Left ventricle myocardium superior (tissue), 1 donor: ENCODE measurements at regions of chr11 and their contacts with region 1.

Region 1: GRCh38 chr11:63023841-63024648 is 8.4 kb upstream of the SLC22A8 start:
- DNase-seq: peak; percentile 91
- ATAC-seq: peak; percentile 94

Region 2: DNA sequence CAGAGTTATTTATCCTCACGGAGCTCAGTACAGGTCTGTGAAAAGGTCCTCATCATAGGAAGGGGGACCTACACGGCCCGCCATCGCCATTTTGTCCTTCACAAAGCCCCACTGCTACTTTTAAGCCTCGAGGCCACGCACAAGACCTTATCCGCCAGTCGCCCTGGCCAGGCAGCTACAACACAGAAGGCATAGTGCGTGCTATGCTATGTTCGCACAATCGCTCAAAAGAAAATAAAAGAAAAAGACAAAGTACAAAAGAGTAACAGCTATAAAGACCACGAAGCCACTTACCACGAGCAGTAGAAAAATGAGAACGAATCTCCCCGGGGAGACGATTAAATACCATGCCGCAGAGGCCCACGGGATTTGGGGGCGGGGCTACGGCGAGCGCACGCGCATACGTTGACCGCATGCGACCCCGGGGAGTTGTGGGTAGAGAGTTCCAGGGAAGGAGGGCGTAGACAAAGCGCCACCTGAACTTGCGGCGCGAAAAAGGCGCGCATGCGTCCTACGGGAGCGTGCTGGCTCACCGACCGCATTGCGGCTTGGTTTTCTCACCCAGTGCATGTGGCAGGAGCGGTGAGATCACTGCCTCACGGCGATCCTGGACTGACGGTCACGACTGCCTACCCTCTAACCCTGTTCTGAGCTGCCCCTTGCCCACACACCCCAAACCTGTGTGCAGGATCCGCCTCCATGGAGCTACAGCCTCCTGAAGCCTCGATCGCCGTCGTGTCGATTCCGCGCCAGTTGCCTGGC is 168.3 kb before region 1 on chr11:
- intact Hi-C with region 1: no loop called
- DNase-seq: peak; percentile 96
- ATAC-seq: peak; percentile 97

Region 3: GRCh38 chr11:62905927-62906531 is 118.0 kb before region 1 on chr11:
- intact Hi-C with region 1: loop called (anchors 1 kb)
- DNase-seq: peak; percentile 79
- ATAC-seq: peak; percentile 86

Region 4: GRCh38 chr11:63508009-63508408 is 484.0 kb after region 1 on chr11:
- intact Hi-C with region 1: no loop called
- DNase-seq: peak; percentile 60
- ATAC-seq: peak; percentile 78